Breast epithelium (tissue), 4 donors: ENCODE measurements at regions of chr9 and their contacts with region 1.

Region 1: DNA sequence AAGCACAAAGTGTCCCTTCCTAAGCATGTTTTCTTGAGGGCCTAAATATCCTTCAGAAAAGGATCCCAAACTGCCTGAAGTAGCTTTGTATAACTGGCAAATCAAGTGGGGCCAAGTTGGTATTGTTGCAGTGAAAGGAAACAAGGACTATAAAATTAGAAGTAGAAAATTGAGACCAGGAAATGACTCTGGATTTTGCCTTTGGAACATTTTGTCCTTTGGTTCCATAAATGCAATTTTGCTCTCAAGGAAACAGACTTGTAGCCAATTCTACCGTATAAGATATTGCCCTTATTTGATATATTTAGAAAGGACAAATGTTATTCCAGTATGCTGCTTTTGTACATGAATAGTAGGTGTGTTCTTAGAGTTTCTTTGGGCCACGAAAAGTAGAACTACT is 34.4 kb downstream of the RABGAP1 start:
- DNase-seq: no peak
- H3K4me3 ChIP-seq: no peak overlapping the region
- H3K27ac ChIP-seq: peak overlapping the region; percentile 49 to 59
- H3K4me1 ChIP-seq: peaks cover 0 to 3% of the 10 kb centered on the region in 2 donors
- H3K27me3 ChIP-seq: no peaks in the 10 kb centered on the region
- CTCF ChIP-seq: no peak
- POLR2A ChIP-seq: no peak

Region 2: DNA sequence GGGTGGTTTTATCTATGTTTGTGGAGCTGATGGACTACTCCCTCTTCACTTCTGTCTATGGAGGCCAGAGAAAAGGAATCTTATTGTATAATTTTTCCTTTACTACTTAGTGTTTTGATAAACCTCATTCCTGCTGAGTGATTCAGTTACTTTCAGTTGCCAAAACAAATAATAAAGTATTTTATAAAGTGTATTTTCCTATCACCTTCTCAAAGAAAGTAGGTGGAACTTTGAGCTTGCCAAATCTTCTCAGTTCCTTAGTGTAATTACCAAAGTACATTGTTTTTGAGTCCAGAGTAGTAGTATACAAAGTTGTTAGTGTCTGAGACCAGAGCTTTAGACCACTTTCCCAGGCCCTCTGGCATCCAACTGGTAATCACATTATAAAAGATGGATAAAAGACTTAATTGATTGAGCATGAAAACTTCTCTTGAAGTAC is 20.9 kb before region 1 on chr9:
- intact Hi-C with region 1: loop called (anchors 1 kb)
- DNase-seq: no peak
- H3K4me3 ChIP-seq: no peak overlapping the region
- H3K27ac ChIP-seq: peak overlapping the region in 1 of 2 donors; percentile 54
- H3K4me1 ChIP-seq: peaks cover 0 to 13% of the 10 kb centered on the region in 2 donors
- H3K27me3 ChIP-seq: no peaks in the 10 kb centered on the region
- CTCF ChIP-seq: no peak
- POLR2A ChIP-seq: no peak

Region 3: DNA sequence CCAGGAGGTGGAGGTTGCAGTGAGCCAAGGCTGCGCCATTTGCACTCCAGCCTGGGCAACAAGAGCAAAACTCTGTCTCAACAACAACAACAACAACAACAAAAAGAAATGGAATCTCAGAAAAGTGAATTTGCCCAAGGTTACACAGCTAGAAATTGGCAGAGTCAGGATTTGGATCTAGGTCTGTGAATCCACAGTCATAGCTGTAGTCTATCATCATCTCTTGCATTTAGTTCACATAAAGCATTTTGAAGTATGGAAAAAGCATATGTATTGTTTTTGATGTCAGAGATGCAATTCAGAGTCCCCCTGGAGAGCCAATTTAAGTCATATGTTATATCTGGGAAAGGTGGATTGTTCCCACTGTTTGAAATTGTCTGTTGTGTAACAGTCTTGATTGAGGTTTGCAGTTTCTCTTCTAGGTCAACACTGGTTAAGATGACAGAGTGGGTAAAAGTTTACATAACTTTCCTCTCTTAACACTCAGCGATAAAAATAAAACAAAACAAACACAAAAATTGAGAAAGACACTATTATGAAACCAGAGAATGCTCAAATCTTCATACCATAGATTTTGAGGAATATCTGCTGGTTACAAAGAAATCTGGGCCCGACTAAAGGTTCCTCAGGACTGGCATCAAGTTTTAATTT is 36.8 kb after region 1 on chr9:
- intact Hi-C with region 1: no loop called
- DNase-seq: no peak
- H3K4me3 ChIP-seq: no peak overlapping the region
- H3K27ac ChIP-seq: peak overlapping the region in 1 of 2 donors; percentile 3
- H3K4me1 ChIP-seq: no peaks in the 10 kb centered on the region
- H3K27me3 ChIP-seq: no peaks in the 10 kb centered on the region
- CTCF ChIP-seq: no peak
- POLR2A ChIP-seq: no peak